ENCODE measurements at regions of chr21 and their contacts with region 1.

Region 1: GRCh38 chr21:25881525-25882376 is 147.0 kb downstream of the GABPA start:
- DNase-seq: peak; percentile 30 to 73
- ATAC-seq: peak; percentile 64 to 81 (median 79)
- H3K4me3 ChIP-seq: no peak overlapping the region
- H3K4me3 Mint-ChIP-seq: no peak overlapping the region
- H3K27ac ChIP-seq: no peak overlapping the region
- H3K27ac Mint-ChIP-seq: no peak overlapping the region
- H3K4me1 ChIP-seq: no peaks in the 10 kb centered on the region
- H3K4me1 Mint-ChIP-seq: peaks cover 0 to 5% of the 10 kb centered on the region in 2 donors
- H3K27me3 ChIP-seq: no peaks in the 10 kb centered on the region
- H3K27me3 Mint-ChIP-seq: no peaks in the 10 kb centered on the region
- CTCF ChIP-seq: peak; percentile 90

Region 2: DNA sequence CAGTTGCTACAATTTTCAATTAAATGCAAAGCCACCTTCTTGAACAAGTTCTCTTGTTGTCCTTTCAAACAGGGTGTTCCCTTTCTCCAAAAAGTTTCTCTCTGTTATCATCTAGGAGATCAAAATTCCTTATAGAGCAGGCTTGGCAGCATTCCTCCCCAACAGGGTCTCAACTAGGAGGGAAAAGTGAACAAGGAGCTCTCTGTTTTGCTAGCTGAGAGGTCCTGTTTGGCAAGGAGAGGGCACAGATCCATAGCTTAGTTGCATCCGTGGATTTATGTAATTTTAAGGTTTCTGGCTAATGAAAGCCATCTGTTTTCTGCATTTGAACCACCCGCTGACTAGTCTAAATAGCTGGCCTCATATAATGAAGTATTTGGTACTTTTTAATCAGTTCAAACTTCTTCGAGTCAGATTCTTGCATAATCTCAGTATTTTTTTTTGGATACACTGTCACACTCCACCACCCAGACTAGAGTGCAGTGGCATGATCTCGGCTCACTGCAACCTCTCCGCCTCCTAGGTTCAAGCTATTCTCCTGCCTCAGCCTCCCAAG is 234.8 kb after region 1 on chr21:
- intact Hi-C with region 1: no loop called
- DNase-seq: no peak
- ATAC-seq: no peak
- H3K4me3 ChIP-seq: no peak overlapping the region
- H3K4me3 Mint-ChIP-seq: no peak overlapping the region
- H3K27ac ChIP-seq: no peak overlapping the region
- H3K27ac Mint-ChIP-seq: no peak overlapping the region
- H3K4me1 ChIP-seq: no peaks in the 10 kb centered on the region
- H3K4me1 Mint-ChIP-seq: no peaks in the 10 kb centered on the region
- H3K27me3 ChIP-seq: no peaks in the 10 kb centered on the region
- H3K27me3 Mint-ChIP-seq: peaks cover 0 to 3% of the 10 kb centered on the region in 2 donors
- CTCF ChIP-seq: no peak

Region 3: GRCh38 chr21:26170471-26171257 is 288.9 kb after region 1 on chr21 and contains the start of gene APP:
- intact Hi-C with region 1: loop called (anchors 5 kb)
- DNase-seq: peak; percentile 77 to 90
- ATAC-seq: peak; percentile 95 to 97 (median 97)
- H3K4me3 ChIP-seq: peak within 1 kb of the TSS; percentile 53
- H3K4me3 Mint-ChIP-seq: peak within 1 kb of the TSS; percentile 84
- H3K27ac ChIP-seq: no peak within 1 kb of the TSS
- H3K27ac Mint-ChIP-seq: peak within 1 kb of the TSS in 1 of 2 donors; percentile 33
- H3K4me1 ChIP-seq: peaks cover 22% of the 10 kb centered on the region
- H3K4me1 Mint-ChIP-seq: peaks cover 20 to 27% of the 10 kb centered on the region in 2 donors
- H3K27me3 ChIP-seq: peaks cover 8% of the 10 kb centered on the region
- H3K27me3 Mint-ChIP-seq: peaks cover 40 to 58% of the 10 kb centered on the region in 2 donors
- CTCF ChIP-seq: peak; percentile 85
- total RNA-seq, gene APP: 5.1 to 10.6 (median 7.8) TPM

Region 4: DNA sequence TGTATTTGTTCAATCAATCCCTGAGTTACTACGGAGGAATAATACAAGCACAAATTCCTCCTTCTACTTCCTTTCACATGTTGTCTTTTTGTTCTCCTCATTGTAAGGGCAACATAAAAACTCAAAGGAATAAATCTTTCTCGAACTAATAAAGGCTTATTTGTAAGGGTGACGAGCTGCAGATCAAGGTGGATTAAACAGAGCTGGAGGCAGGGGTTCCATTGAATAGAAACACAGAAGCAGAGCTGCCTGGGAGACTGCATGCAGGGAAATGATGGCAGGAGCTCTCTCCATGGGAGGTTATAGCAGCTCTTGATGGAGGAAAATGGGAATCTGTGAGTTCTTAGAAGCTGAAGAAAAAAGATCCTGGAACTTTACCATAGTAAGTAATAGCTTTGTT is 531.1 kb after region 1 on chr21:
- intact Hi-C with region 1: no loop called
- DNase-seq: no peak
- ATAC-seq: no peak
- H3K4me3 ChIP-seq: no peak overlapping the region
- H3K4me3 Mint-ChIP-seq: no peak overlapping the region
- H3K27ac ChIP-seq: no peak overlapping the region
- H3K27ac Mint-ChIP-seq: no peak overlapping the region
- H3K4me1 ChIP-seq: no peaks in the 10 kb centered on the region
- H3K4me1 Mint-ChIP-seq: peaks cover 0 to 6% of the 10 kb centered on the region in 2 donors
- H3K27me3 ChIP-seq: no peaks in the 10 kb centered on the region
- H3K27me3 Mint-ChIP-seq: peaks cover 0 to 2% of the 10 kb centered on the region in 2 donors
- CTCF ChIP-seq: no peak

Measured in natural killer cell (primary cell).